ENCODE measurements at regions of chr7 and their contacts with region 1.

Region 1: GRCh38 chr7:107396990-107397389 is 72.9 kb upstream of the GPR22 start:
- DNase-seq: peak in 2 of 4 experiments; percentile 16 to 18
- ATAC-seq: peak; percentile 58
- H3K4me3 ChIP-seq: no peak overlapping the region
- H3K27ac ChIP-seq: no peak overlapping the region
- H3K4me1 ChIP-seq: no peaks in the 10 kb centered on the region
- H3K27me3 ChIP-seq: no peaks in the 10 kb centered on the region
- CTCF ChIP-seq: no peak
- EP300 ChIP-seq: no peak
- POLR2A ChIP-seq: no peak
- RAD21 ChIP-seq: no peak

Region 2: GRCh38 chr7:106793015-106793975 is 603.7 kb before region 1 on chr7:
- CTCF ChIA-PET with region 1: no interaction called
- POLR2A ChIA-PET with region 1: no interaction called
- in situ Hi-C with region 1: no loop called
- intact Hi-C with region 1: no loop called
- DNase-seq: peak; percentile 59 to 78 (median 63)
- ATAC-seq: peak; percentile 53
- H3K4me3 ChIP-seq: no peak overlapping the region
- H3K27ac ChIP-seq: no peak overlapping the region
- H3K4me1 ChIP-seq: peaks cover 0 to 5% of the 10 kb centered on the region in 2 experiments; a peak in 1 of 5 replicates
- H3K27me3 ChIP-seq: no peaks in the 10 kb centered on the region
- CTCF ChIP-seq: peak; percentile 59 to 93 (median 74); a peak in 5 of 6 replicates
- EP300 ChIP-seq: no peak
- POLR2A ChIP-seq: no peak
- RAD21 ChIP-seq: peak; percentile 91 to 94

Region 3: GRCh38 chr7:107408349-107408748 is 11.4 kb after region 1 on chr7:
- CTCF ChIA-PET with region 1: no interaction called
- POLR2A ChIA-PET with region 1: interaction called, 10 read pairs
- in situ Hi-C with region 1: no loop called
- intact Hi-C with region 1: no loop called
- DNase-seq: no peak
- ATAC-seq: no peak
- H3K4me3 ChIP-seq: no peak overlapping the region
- H3K27ac ChIP-seq: no peak overlapping the region
- H3K4me1 ChIP-seq: no peaks in the 10 kb centered on the region
- H3K27me3 ChIP-seq: no peaks in the 10 kb centered on the region
- CTCF ChIP-seq: no peak
- EP300 ChIP-seq: no peak
- POLR2A ChIP-seq: no peak
- RAD21 ChIP-seq: no peak

Region 4: GRCh38 chr7:107480932-107481331 is 83.9 kb after region 1 on chr7:
- CTCF ChIA-PET with region 1: no interaction called
- POLR2A ChIA-PET with region 1: no interaction called
- in situ Hi-C with region 1: no loop called
- intact Hi-C with region 1: no loop called
- DNase-seq: peak in 3 of 4 experiments; percentile 20 to 47 (median 37)
- ATAC-seq: peak; percentile 84
- H3K4me3 ChIP-seq: no peak overlapping the region
- H3K27ac ChIP-seq: no peak overlapping the region; the same call in 2 of the 3 replicates
- H3K4me1 ChIP-seq: peaks cover 0 to 8% of the 10 kb centered on the region in 2 experiments; a peak in 2 of 5 replicates
- H3K27me3 ChIP-seq: no peaks in the 10 kb centered on the region
- CTCF ChIP-seq: no peak
- EP300 ChIP-seq: peak; percentile 69
- POLR2A ChIP-seq: no peak
- RAD21 ChIP-seq: no peak

Region 5: GRCh38 chr7:108118959-108119358 is 722.0 kb after region 1 on chr7:
- CTCF ChIA-PET with region 1: no interaction called
- POLR2A ChIA-PET with region 1: no interaction called
- in situ Hi-C with region 1: no loop called
- intact Hi-C with region 1: no loop called
- DNase-seq: no peak
- ATAC-seq: no peak
- H3K4me3 ChIP-seq: no peak overlapping the region
- H3K27ac ChIP-seq: no peak overlapping the region
- H3K4me1 ChIP-seq: no peaks in the 10 kb centered on the region
- H3K27me3 ChIP-seq: no peaks in the 10 kb centered on the region
- CTCF ChIP-seq: no peak
- EP300 ChIP-seq: no peak
- POLR2A ChIP-seq: no peak
- RAD21 ChIP-seq: no peak